ENCODE measurements at regions of chr11 and their contacts with region 1.

Region 1: DNA sequence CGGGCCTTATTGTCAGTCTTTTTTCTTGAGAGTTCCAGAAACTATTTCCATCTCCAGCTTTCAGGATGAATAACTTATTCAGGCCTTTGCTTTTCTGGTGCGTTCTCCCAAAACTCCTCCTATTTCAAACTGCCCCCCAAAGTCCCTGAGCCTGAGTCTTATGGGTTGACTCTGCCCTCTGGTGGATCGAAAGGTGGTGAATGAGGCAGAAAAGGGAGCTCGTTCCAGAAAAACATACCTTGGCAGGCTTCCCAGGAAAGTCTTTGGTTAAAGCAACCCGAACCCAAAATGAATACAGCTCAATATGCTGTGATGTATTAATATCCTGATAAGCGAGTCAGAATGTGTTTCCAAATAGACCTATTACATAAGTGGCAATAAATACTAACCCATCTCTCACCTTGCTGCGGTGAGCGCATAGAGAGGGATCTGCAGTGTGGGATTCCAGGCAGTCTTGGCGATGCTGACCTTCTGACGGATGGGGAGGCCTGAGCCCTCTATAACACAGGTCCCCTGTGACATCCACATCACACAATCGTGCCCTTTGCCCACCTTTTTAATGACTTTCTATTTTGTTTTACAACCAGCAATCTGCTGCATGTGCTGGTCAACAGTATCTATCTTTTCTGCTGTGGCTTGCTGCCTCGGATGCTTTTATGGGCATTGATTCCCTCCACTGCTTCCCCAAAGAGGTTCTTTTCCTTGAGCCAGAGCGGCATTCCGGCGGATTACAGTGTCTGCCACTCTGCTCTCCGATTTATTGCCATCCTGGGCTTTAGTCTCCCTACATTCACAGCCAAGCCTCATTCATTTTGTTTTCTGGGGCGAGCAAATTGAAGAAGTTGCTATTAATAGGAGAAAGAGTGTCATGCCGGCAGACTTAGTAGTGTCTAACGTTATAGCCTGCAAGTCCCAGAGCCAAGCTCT is 756.8 kb downstream of the NTM start:
- DNase-seq: peak; percentile 71
- H3K4me3 ChIP-seq: peak overlapping the region in 2 of 3 experiments; percentile 26 to 31
- H3K27ac ChIP-seq: no peak overlapping the region
- H3K4me1 ChIP-seq: peaks cover 11% of the 10 kb centered on the region
- H3K27me3 ChIP-seq: no peaks in the 10 kb centered on the region
- CTCF ChIP-seq: peak; percentile 61 to 66
- POLR2A ChIP-seq: no peak

Region 2: DNA sequence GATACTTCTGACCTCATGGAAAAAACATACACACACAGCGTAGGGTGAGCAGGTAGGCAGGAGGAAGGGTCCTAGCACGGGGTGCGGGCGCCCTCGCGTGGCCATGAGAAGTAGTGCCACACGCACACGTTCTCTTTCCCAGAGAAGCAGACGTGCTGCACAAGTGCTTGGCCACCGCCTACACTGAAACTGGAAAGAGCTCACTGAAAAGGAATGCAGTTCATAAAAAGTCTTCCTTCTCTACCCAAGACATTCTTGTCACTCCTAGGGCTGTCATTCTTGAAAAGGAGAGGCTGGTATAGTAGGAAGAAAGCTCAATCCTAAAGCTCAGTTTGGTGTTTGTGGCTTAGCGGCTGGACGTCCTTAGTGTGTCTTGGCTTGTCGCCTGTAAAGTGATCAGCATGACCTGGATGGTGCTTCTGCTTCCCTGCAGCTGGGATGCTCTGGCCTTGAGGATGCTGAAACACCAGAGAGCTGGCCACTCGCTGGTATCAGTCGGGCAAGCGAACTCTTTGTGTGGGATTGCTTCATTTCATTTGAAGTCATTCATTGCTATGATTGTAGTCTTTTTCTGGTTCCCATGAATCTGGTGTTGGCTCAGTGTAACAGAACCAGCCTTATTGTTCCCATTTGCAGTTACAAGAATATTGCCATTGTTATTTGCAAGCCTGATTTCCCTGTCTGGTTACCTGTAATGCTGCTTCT is 453.0 kb before region 1 on chr11:
- CTCF ChIA-PET with region 1: interaction called, 14 read pairs
- POLR2A ChIA-PET with region 1: no interaction called
- dilution Hi-C with region 1: no loop called
- intact Hi-C with region 1: no loop called
- DNase-seq: peak; percentile 62
- H3K4me3 ChIP-seq: no peak overlapping the region
- H3K27ac ChIP-seq: no peak overlapping the region
- H3K4me1 ChIP-seq: no peaks in the 10 kb centered on the region
- H3K27me3 ChIP-seq: peaks cover 0 to 4% of the 10 kb centered on the region in 2 experiments
- CTCF ChIP-seq: peak; percentile 94 to 96
- POLR2A ChIP-seq: no peak

Region 3: GRCh38 chr11:131748151-131749050 is 378.8 kb before region 1 on chr11:
- CTCF ChIA-PET with region 1: interaction called, 109 read pairs
- POLR2A ChIA-PET with region 1: no interaction called
- dilution Hi-C with region 1: no loop called
- intact Hi-C with region 1: loop called (anchors 1 kb)
- DNase-seq: peak; percentile 85
- H3K4me3 ChIP-seq: no peak overlapping the region
- H3K27ac ChIP-seq: peak overlapping the region; percentile 92
- H3K4me1 ChIP-seq: peaks cover 56% of the 10 kb centered on the region
- H3K27me3 ChIP-seq: no peaks in the 10 kb centered on the region
- CTCF ChIP-seq: peak; percentile 83 to 84
- POLR2A ChIP-seq: no peak

Region 4: GRCh38 chr11:131877246-131877942 is 249.8 kb before region 1 on chr11:
- CTCF ChIA-PET with region 1: interaction called, 10 read pairs
- POLR2A ChIA-PET with region 1: no interaction called
- dilution Hi-C with region 1: no loop called
- intact Hi-C with region 1: no loop called
- DNase-seq: no peak
- H3K4me3 ChIP-seq: no peak overlapping the region
- H3K27ac ChIP-seq: no peak overlapping the region
- H3K4me1 ChIP-seq: peaks cover 4% of the 10 kb centered on the region
- H3K27me3 ChIP-seq: peaks cover 0 to 4% of the 10 kb centered on the region in 2 experiments
- CTCF ChIP-seq: no peak
- POLR2A ChIP-seq: no peak

Region 5: GRCh38 chr11:131924457-131925201 is 202.6 kb before region 1 on chr11:
- CTCF ChIA-PET with region 1: interaction called, 26 read pairs
- POLR2A ChIA-PET with region 1: no interaction called
- dilution Hi-C with region 1: no loop called
- intact Hi-C with region 1: no loop called
- DNase-seq: peak; percentile 52
- H3K4me3 ChIP-seq: no peak overlapping the region
- H3K27ac ChIP-seq: no peak overlapping the region
- H3K4me1 ChIP-seq: no peaks in the 10 kb centered on the region
- H3K27me3 ChIP-seq: no peaks in the 10 kb centered on the region
- CTCF ChIP-seq: no peak
- POLR2A ChIP-seq: no peak

Region 6: DNA sequence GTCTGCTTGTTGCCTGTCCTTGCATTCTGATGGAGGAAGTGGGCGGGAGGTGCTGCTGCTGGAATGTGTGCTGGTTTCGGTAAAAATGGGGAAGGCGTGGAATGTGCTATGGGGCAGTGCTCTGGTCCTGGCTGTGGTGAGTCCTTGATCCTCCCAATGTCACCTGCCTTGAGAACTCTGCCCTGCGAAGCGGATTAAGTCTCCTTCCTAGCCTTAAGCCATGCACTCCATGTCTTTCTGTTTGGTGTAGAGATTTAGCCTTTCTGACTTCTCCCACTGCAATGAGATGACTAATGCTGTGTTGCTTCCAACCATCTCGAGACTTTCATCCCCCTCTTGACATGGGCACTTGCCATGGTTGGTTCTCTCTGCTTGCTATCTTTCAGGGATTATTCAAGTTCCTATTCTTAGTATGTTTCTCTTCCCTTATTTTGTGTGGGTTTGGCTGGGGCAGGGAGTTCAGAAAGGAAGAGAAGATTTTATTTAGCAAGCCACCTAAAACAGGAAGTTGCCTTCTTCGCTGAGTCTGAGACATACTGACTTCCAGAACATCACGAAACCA is 68.9 kb before region 1 on chr11:
- CTCF ChIA-PET with region 1: interaction called, 10 read pairs
- POLR2A ChIA-PET with region 1: no interaction called
- dilution Hi-C with region 1: no loop called
- intact Hi-C with region 1: no loop called
- DNase-seq: no peak
- H3K4me3 ChIP-seq: no peak overlapping the region
- H3K27ac ChIP-seq: no peak overlapping the region
- H3K4me1 ChIP-seq: peaks cover 21% of the 10 kb centered on the region
- H3K27me3 ChIP-seq: no peaks in the 10 kb centered on the region
- CTCF ChIP-seq: no peak
- POLR2A ChIP-seq: no peak

Region 7: GRCh38 chr11:132140056-132140455 is 12.8 kb after region 1 on chr11:
- CTCF ChIA-PET with region 1: interaction called, 19 read pairs
- POLR2A ChIA-PET with region 1: no interaction called
- dilution Hi-C with region 1: no loop called
- intact Hi-C with region 1: no loop called
- DNase-seq: no peak
- H3K4me3 ChIP-seq: no peak overlapping the region
- H3K27ac ChIP-seq: no peak overlapping the region
- H3K4me1 ChIP-seq: no peaks in the 10 kb centered on the region
- H3K27me3 ChIP-seq: no peaks in the 10 kb centered on the region
- CTCF ChIP-seq: no peak
- POLR2A ChIP-seq: no peak

Region 8: DNA sequence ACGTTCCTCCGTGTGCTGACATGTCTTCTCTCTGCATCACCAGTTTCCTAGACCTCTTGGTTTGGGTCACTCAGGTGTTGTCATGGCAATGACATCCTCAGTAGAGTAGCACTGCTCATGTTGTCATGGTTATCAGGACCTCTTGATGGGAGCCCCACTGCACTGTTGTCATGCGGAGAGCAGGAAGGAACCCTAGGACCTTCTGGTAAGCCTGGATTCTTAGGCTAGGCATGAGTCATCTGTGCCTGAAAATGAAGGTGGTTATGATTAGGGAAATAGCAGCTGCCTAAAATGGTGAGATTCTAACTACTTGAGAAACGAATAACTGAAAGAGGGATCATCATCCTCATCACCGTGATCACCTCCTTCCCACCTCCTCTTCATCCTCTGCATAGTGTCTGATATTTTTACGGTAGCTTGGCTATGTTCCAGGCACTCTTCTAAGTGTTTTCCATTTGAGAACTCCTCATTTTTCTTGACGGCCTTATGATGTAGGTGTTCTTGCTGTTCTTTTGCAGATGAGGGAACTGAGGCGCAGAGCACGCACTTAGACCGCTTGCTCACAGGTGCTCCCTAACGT is 101.6 kb after region 1 on chr11:
- CTCF ChIA-PET with region 1: no interaction called
- POLR2A ChIA-PET with region 1: no interaction called
- dilution Hi-C with region 1: no loop called
- intact Hi-C with region 1: no loop called
- DNase-seq: no peak
- H3K4me3 ChIP-seq: no peak overlapping the region
- H3K27ac ChIP-seq: no peak overlapping the region
- H3K4me1 ChIP-seq: no peaks in the 10 kb centered on the region
- H3K27me3 ChIP-seq: no peaks in the 10 kb centered on the region
- CTCF ChIP-seq: no peak
- POLR2A ChIP-seq: no peak

Measured in endothelial cell of umbilical vein (primary cell).